ENCODE measurements at regions of chr2 and their contacts with region 1.

Region 1: DNA sequence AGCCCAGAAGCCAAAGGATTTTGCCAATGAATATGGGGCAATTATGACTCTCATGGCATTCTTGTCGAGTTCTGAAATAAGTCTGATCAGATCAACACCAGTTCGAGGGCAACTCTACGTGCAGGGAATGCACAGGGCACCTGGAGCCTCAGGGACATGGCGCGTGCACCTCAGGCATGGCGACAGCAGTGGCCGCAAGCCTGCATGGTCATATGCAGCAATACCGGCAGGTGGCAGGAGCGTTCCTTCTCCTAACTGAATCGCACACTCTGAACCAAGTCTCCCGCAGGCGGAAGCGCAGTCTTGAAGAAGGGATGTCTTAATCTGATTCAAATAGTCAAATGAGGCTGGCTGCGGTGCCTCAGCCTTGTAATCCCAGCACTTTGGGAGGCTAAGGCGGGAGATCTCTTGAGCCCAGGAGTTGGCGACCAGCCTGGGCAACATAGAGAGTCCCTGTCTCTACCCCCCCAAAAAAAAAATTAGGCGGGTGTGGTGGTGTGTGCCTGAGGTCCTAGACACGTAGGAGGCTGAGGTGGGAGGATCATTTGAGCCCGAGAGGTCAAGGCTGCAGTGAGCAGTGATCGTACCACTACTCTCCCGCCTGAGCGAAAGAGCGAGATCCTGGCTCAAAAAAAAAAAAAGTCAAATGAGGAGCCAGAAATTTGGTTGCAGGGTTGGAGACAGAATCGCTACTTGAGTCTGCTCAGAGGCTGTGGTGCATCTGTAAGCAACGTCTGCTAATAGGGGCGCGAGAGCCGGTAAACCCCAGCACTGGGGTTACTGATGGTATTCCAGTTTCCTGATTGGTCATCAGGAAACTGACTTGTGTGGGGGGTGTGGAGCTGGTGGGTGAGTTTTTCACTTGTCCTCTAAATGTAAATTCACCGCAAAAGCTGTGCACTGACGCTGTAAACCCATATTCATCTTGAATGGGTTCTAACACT is 28.8 kb downstream of the FHL2 start:
- DNase-seq: peak; percentile 71 to 90 (median 75)
- H3K4me3 ChIP-seq: no peak overlapping the region
- H3K4me3 Mint-ChIP-seq: peak overlapping the region in 6 of 7 donors; percentile 35 to 73 (median 64)
- H3K27ac ChIP-seq: no peak overlapping the region
- H3K27ac Mint-ChIP-seq: peak overlapping the region in 5 of 8 donors; percentile 14 to 80 (median 64)
- H3K4me1 ChIP-seq: peaks cover 14% of the 10 kb centered on the region
- H3K4me1 Mint-ChIP-seq: peaks cover 21 to 32% (median 25%) of the 10 kb centered on the region in 3 donors
- H3K27me3 ChIP-seq: no peaks in the 10 kb centered on the region
- H3K27me3 Mint-ChIP-seq: no peaks in the 10 kb centered on the region

Region 2: DNA sequence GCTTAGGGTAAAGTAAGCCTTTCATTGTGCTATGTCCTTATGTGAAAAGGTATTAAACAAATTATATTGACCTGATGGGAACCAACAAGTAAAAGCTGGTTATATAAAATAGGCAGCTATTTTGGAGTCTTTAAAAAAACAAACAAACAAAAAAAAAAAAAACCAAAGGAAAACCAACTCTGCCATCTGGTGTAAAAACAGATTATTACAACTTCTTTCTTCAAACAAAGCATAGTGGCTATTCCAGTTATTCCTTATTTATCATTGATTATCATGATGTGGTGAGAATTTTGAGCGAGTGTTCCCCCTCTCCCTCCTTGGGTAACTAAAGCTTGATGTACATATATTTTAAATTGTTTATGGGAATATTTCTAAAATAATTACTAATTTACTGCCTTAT is 151.2 kb after region 1 on chr2:
- CTCF ChIA-PET with region 1: interaction called, 99 read pairs
- POLR2A ChIA-PET with region 1: interaction called, 4 read pairs
- DNase-seq: no peak
- H3K4me3 ChIP-seq: no peak overlapping the region
- H3K4me3 Mint-ChIP-seq: no peak overlapping the region
- H3K27ac ChIP-seq: no peak overlapping the region
- H3K27ac Mint-ChIP-seq: no peak overlapping the region
- H3K4me1 ChIP-seq: no peaks in the 10 kb centered on the region
- H3K4me1 Mint-ChIP-seq: no peaks in the 10 kb centered on the region
- H3K27me3 ChIP-seq: no peaks in the 10 kb centered on the region
- H3K27me3 Mint-ChIP-seq: peaks cover 2 to 6% of the 10 kb centered on the region in 2 donors

Measured in CD8-positive, alpha-beta memory T cell (primary cell).